Thyroid gland (tissue), 4 donors: ENCODE measurements at regions of chr9 and their contacts with region 1.

Region 1: GRCh38 chr9:128847803-128848202 is 18.2 kb upstream of the SPOUT1 start:
- DNase-seq: no peak
- H3K4me3 ChIP-seq: no peak overlapping the region
- H3K27ac ChIP-seq: no peak overlapping the region
- H3K4me1 ChIP-seq: peaks cover under 1 to 13% of the 10 kb centered on the region in 2 donors
- H3K27me3 ChIP-seq: no peaks in the 10 kb centered on the region
- CTCF ChIP-seq: no peak
- POLR2A ChIP-seq: no peak

Region 2: GRCh38 chr9:128927731-128928411 is 80.1 kb after region 1 on chr9:
- intact Hi-C with region 1: loop called (anchors 2 kb)
- DNase-seq: peak; percentile 65
- H3K4me3 ChIP-seq: no peak overlapping the region
- H3K27ac ChIP-seq: peak overlapping the region in 2 of 3 donors; percentile 20 to 62
- H3K4me1 ChIP-seq: peaks cover 5 to 13% of the 10 kb centered on the region in 2 donors
- H3K27me3 ChIP-seq: no peaks in the 10 kb centered on the region
- CTCF ChIP-seq: peak; percentile 82 to 94 (median 91)
- POLR2A ChIP-seq: no peak